Right lobe of liver (tissue), 6 donors: ENCODE measurements at regions of chr11 and their contacts with region 1.

Region 1: GRCh38 chr11:133082851-133083488 is 449.3 kb downstream of the OPCML start:
- DNase-seq: peak; percentile 69 to 70 (median 70)
- ATAC-seq: peak; percentile 96 to 99 (median 98)
- H3K4me3 ChIP-seq: peak overlapping the region in 2 of 3 donors; percentile 29 to 45
- H3K27ac ChIP-seq: no peak overlapping the region
- H3K4me1 ChIP-seq: no peaks in the 10 kb centered on the region
- H3K27me3 ChIP-seq: no peaks in the 10 kb centered on the region
- CTCF ChIP-seq: peak; percentile 67 to 99 (median 82)
- POLR2A ChIP-seq: no peak

Region 2: DNA sequence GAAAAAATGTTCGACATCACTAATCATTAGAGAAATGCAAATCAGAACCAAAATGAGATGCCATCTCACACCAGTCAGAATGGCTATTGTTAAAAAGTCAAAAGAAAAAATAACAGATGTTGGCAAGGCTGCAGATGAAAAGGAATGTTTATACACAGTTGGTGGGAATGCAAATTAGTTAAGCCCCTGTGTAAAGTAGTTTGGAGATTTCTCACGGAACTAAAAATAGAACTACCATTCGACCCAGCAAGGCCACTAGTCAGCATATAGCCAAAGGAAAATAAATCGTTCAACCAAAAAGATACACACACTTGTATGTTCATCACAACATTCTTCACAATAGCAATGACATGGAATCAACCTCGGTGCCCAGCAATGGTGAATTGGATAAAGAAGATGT is 53.9 kb before region 1 on chr11:
- intact Hi-C with region 1: no loop called
- DNase-seq: no peak
- ATAC-seq: no peak
- H3K4me3 ChIP-seq: no peak overlapping the region
- H3K27ac ChIP-seq: no peak overlapping the region
- H3K4me1 ChIP-seq: no peaks in the 10 kb centered on the region
- H3K27me3 ChIP-seq: no peaks in the 10 kb centered on the region
- CTCF ChIP-seq: no peak
- POLR2A ChIP-seq: no peak

Region 3: DNA sequence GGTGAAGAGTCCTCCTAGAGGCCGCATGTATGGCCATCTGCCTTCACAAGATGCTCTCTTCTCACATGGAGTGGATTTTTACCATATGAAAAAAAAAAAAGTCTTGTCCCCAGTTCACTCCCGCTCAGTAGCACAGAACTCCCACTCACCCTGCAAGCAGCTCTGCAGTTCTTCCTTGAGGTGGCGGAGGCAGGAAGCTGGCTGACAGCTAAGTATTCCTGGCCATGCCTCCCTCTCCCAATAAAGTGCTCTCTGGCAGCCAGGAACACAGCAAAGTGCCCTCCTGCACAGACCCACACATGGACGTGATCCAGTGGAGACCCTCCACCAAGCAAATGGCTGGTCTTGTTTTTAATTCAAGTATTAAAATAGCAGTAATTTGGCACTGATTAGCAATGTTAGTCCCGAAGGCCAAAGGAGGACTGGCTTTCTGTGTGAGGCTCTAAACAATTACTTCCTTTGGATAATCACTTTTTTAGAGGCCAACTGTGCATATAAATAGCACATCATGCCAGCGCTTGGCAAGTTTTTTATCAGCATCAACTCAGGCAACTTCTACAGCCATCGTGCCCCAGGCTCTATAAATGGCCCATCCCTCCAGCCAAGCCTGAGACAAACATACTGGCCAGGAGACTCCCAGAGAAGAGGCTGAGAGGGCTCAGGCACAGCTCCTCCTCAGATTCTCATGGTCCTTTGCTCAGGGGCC is 35.7 kb after region 1 on chr11:
- intact Hi-C with region 1: no loop called
- DNase-seq: no peak
- ATAC-seq: no peak
- H3K4me3 ChIP-seq: no peak overlapping the region
- H3K27ac ChIP-seq: no peak overlapping the region
- H3K4me1 ChIP-seq: no peaks in the 10 kb centered on the region
- H3K27me3 ChIP-seq: no peaks in the 10 kb centered on the region
- CTCF ChIP-seq: no peak
- POLR2A ChIP-seq: no peak

Region 4: GRCh38 chr11:133156986-133157745 is 74.2 kb after region 1 on chr11:
- intact Hi-C with region 1: loop called in 1 of 2 experiments (anchors 10 kb)
- DNase-seq: no peak
- ATAC-seq: no peak
- H3K4me3 ChIP-seq: no peak overlapping the region
- H3K27ac ChIP-seq: no peak overlapping the region
- H3K4me1 ChIP-seq: no peaks in the 10 kb centered on the region
- H3K27me3 ChIP-seq: no peaks in the 10 kb centered on the region
- CTCF ChIP-seq: no peak
- POLR2A ChIP-seq: no peak

Region 5: GRCh38 chr11:133834682-133835592 is 752.0 kb after region 1 on chr11:
- intact Hi-C with region 1: loop called in 1 of 2 experiments (anchors 5 kb)
- DNase-seq: peak in 1 of 3 donors; percentile 56
- ATAC-seq: peak; percentile 76 to 96 (median 82)
- H3K4me3 ChIP-seq: no peak overlapping the region
- H3K27ac ChIP-seq: no peak overlapping the region
- H3K4me1 ChIP-seq: no peaks in the 10 kb centered on the region
- H3K27me3 ChIP-seq: no peaks in the 10 kb centered on the region
- CTCF ChIP-seq: peak; percentile 48 to 64 (median 56)
- POLR2A ChIP-seq: no peak